Pancreas (tissue), 10 donors: ENCODE measurements at regions of chr14 and their contacts with region 1.

Region 1: DNA sequence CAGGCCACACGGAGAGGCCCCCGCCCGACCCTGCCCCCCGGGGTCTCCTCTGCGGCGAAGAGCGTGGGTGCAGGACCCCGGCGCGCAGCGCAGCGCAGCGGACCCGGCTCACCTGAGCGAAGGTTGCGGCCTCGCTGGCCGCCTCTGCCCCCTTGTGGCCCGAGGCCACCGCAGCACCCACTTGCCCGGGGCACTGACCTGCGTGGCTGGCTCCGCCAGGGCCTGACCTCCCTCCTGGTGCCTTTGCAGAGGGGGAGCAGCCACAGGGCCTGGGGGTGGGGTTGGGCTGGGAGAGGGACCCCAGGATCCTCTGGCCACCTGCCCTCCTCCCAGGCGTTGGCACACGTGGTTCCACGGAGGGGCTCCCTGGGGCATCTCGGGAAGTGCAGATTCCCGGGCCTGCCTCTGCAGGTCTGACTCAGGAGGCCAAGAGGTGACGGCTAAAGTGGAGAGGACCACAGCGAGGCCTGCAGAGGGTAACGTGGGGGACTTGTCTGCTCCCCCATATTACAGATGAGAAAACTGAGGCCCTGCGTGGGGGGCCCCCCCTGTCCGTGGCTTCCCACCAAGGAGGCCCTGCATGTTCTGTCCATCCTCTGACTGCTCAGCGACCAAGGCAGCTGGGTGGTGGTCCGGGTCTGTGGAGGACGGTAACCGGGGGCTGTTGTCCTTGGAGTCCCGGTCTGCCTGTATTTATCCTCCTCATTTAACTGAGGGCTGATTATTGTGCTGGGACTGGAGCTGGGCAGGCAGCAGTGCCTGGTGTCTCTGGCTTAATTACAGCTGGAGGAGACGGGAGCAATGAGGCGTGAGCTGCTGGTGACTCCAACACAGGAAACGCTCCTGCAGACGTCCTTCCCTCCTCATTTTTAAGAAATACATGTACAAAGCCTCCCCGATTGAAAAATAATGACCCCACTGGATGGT is 67.9 kb upstream of the BEGAIN start:
- DNase-seq: peak; percentile 41 to 90 (median 74)
- ATAC-seq: peak; percentile 69 to 87 (median 85)
- H3K4me3 ChIP-seq: peak overlapping the region in 2 of 4 donors; percentile 21 to 29
- H3K27ac ChIP-seq: no peak overlapping the region
- H3K4me1 ChIP-seq: peaks cover 10 to 17% (median 10%) of the 10 kb centered on the region in 3 donors
- H3K27me3 ChIP-seq: no peaks in the 10 kb centered on the region
- CTCF ChIP-seq: peak; percentile 56 to 87 (median 76)

Region 2: GRCh38 chr14:100025111-100025510 is 630.0 kb before region 1 on chr14:
- intact Hi-C with region 1: no loop called
- DNase-seq: no peak
- ATAC-seq: peak; percentile 31 to 77 (median 64)
- H3K4me3 ChIP-seq: no peak overlapping the region
- H3K27ac ChIP-seq: no peak overlapping the region
- H3K4me1 ChIP-seq: peaks cover 12 to 19% (median 15%) of the 10 kb centered on the region in 3 donors
- H3K27me3 ChIP-seq: no peaks in the 10 kb centered on the region
- CTCF ChIP-seq: no peak

Region 3: GRCh38 chr14:100383727-100384158 is 271.3 kb before region 1 on chr14:
- intact Hi-C with region 1: loop called in 2 of 3 experiments (anchors 5 to 10 kb)
- DNase-seq: peak; percentile 52 to 82 (median 73)
- ATAC-seq: peak; percentile 82 to 89 (median 85)
- H3K4me3 ChIP-seq: no peak overlapping the region
- H3K27ac ChIP-seq: no peak overlapping the region
- H3K4me1 ChIP-seq: peaks cover 0 to 1% (median 1%) of the 10 kb centered on the region in 3 donors
- H3K27me3 ChIP-seq: no peaks in the 10 kb centered on the region
- CTCF ChIP-seq: peak; percentile 59 to 83 (median 76)

Region 4: GRCh38 chr14:100428727-100429126 is 226.3 kb before region 1 on chr14:
- intact Hi-C with region 1: loop called in 1 of 3 experiments (anchors 5 kb)
- DNase-seq: no peak
- ATAC-seq: peak in 1 of 4 donors; percentile 30
- H3K4me3 ChIP-seq: no peak overlapping the region
- H3K27ac ChIP-seq: no peak overlapping the region
- H3K4me1 ChIP-seq: peaks cover 0 to 4% (median 0%) of the 10 kb centered on the region in 3 donors
- H3K27me3 ChIP-seq: no peaks in the 10 kb centered on the region
- CTCF ChIP-seq: no peak